Mammary epithelial cell (primary cell): ENCODE measurements at regions of chr7 and their contacts with region 1.

Region 1: GRCh38 chr7:150642926-150643325 is 10.7 kb upstream of the GIMAP6 start:
- DNase-seq: no peak
- H3K4me3 ChIP-seq: no peak overlapping the region
- H3K27ac ChIP-seq: no peak overlapping the region
- H3K4me1 ChIP-seq: no peaks in the 10 kb centered on the region
- H3K27me3 ChIP-seq: no peaks in the 10 kb centered on the region
- CTCF ChIP-seq: no peak

Region 2: DNA sequence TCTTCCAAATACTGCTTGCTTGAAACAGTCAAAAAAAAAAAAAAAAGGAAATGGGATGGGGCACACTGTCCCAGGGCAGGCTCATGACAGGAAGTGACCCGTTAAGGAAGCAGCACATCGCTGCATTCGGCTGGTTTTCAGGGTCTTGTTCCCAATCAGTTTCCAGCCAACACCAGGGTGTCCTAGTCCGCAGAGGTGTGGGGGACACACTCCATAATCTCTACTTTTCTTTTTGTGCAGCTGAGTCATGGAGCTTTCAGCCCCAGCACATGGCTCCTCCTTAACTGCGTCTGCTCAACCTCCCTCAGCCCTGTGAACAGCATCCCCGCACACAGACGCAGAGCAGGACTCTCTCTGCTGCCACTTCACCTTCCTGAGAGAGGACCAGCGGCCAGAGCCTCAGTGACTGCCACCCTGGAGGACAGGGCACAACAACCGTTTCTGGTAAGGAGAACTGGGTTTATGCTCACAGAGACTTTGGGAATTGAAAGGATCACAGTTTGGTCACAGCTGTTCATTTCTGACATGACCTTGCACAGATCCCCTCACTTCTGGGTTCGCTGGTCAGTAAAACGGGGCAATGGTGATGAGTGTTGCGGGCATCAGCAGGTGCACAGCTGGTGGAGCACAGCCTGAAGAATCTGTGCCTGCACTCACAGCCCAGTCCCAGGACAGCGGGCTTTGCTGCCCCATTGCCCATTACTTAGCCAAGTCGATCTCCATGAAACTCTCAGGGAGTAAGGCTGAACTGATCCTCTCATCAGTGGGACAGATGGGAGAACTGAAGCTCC is 94.5 kb after region 1 on chr7 and contains the start of gene GIMAP5:
- CTCF ChIA-PET with region 1: no interaction called
- dilution Hi-C with region 1: loop called (anchors 5 kb)
- in situ Hi-C with region 1: no loop called
- intact Hi-C with region 1: no loop called
- DNase-seq: no peak
- H3K4me3 ChIP-seq: no peak within 1 kb of the TSS
- H3K27ac ChIP-seq: peak within 1 kb of the TSS; percentile 74
- H3K4me1 ChIP-seq: peaks cover 20% of the 10 kb centered on the region
- H3K27me3 ChIP-seq: no peaks in the 10 kb centered on the region
- CTCF ChIP-seq: no peak
- total RNA-seq, gene GIMAP5: not detected

Region 3: DNA sequence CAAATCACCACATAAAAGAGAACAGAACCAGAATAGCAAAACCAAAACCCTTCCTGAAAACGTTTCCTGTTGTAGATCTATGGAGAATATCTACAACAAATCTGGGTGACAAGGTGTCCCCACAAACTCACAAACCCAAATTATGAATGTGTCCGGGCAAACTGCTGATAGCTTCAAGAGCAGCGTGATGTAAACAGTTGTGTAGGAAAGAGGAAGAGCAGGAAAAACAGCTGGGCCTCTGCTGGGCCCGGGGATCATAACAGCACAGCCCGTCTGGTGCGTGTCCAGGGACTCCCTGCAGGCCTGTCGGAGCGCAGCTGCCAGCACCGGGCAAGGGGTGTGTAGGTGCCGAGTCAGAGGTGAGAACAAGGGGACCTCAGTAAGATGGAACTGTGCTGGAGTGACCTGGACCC is 281.4 kb after region 1 on chr7:
- CTCF ChIA-PET with region 1: no interaction called
- dilution Hi-C with region 1: no loop called
- in situ Hi-C with region 1: no loop called
- intact Hi-C with region 1: no loop called
- DNase-seq: no peak
- H3K4me3 ChIP-seq: no peak overlapping the region
- H3K27ac ChIP-seq: no peak overlapping the region
- H3K4me1 ChIP-seq: no peaks in the 10 kb centered on the region
- H3K27me3 ChIP-seq: no peaks in the 10 kb centered on the region
- CTCF ChIP-seq: no peak